ENCODE measurements at regions of chr10 and their contacts with region 1.

Region 1: DNA sequence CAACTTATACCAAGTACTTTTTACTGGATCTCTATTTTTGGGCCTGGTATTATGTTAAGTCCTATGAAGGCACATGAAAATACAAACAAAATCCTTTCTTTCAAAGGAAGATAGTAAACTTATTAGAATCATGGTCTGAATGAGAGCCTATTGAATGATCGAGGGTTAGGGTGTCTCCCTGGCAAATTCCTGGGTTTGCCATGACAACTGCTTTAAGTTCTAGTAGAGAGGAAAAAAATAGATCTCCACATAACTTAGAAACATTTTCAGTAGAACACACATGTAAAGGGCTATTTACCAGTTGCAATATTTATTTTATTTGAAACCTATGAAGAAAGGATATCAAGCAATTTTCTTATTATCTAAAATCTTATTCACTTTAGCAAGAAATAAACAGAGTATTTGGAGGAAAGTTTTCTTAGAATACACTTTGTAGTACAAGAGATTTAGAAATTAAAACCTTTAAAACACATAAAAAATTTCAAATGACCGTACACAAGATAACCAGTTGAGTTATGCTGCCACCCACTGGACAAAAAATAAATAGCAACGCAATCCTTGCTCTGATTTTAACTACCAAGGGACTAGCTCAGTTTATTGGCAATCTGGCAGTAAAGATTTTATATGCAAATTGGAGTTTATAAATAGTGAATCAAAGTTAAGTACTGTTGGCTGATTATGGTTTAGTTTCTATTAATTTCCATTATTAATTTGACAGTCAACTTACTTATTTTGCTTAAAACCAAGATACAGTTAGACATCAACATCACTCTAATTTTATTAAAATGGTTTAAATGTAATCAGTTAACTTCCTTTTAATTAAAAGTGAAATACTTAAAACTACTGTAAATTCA is 33.9 kb downstream of the CACUL1 start:
- DNase-seq: peak; percentile 50
- ATAC-seq: peak; percentile 76; the same call in 1 of the 2 replicates
- H3K4me3 ChIP-seq: no peak overlapping the region
- H3K27ac ChIP-seq: no peak overlapping the region
- H3K4me1 ChIP-seq: peaks cover 6% of the 10 kb centered on the region; the same call in 1 of the 2 replicates
- H3K27me3 ChIP-seq: no peaks in the 10 kb centered on the region
- CTCF ChIP-seq: peak; percentile 88; the same call in 1 of the 2 replicates

Region 2: DNA sequence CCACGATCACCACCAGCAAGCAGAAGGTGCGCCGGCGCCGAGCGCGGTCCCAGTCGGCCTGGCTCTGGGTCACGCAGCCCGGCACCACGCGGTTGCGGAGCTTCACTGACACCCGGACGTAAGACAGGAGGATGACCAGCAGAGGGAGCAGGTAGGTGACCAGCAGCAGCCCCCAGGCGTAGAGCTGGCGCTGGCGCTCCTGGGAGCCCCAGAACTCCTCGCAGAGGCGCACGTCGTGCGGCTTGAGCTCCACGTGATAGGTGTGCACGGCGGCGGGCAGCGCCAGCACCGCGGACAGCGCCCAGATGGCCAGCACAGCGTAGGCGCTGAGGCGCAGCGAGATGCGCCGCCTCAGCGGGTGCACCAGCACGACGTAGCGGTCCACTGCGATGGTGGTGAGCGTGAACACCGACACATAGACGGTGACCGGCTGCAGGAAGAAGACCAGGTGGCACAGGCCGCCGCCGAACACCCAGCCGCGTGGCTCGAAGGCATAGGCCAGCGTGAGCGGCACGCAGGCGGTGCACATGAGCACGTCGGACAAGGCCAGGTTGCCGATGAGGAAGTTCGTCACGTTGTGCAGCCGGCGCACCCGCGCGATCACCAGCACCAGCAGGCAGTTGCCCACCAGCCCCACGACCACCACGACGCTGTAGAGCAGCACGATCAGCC is 126.4 kb before region 1 on chr10:
- CTCF ChIA-PET with region 1: no interaction called
- POLR2A ChIA-PET with region 1: no interaction called
- in situ Hi-C with region 1: loop called (anchors 25 kb)
- intact Hi-C with region 1: no loop called
- DNase-seq: no peak
- ATAC-seq: no peak
- H3K4me3 ChIP-seq: no peak overlapping the region
- H3K27ac ChIP-seq: no peak overlapping the region
- H3K4me1 ChIP-seq: no peaks in the 10 kb centered on the region
- H3K27me3 ChIP-seq: peaks cover 36% of the 10 kb centered on the region
- CTCF ChIP-seq: peak; percentile 50; the same call in 1 of the 2 replicates

Measured in Panc1 (cell line).